Calu3 (cell line): ENCODE measurements at regions of chr22 and their contacts with region 1.

Region 1: DNA sequence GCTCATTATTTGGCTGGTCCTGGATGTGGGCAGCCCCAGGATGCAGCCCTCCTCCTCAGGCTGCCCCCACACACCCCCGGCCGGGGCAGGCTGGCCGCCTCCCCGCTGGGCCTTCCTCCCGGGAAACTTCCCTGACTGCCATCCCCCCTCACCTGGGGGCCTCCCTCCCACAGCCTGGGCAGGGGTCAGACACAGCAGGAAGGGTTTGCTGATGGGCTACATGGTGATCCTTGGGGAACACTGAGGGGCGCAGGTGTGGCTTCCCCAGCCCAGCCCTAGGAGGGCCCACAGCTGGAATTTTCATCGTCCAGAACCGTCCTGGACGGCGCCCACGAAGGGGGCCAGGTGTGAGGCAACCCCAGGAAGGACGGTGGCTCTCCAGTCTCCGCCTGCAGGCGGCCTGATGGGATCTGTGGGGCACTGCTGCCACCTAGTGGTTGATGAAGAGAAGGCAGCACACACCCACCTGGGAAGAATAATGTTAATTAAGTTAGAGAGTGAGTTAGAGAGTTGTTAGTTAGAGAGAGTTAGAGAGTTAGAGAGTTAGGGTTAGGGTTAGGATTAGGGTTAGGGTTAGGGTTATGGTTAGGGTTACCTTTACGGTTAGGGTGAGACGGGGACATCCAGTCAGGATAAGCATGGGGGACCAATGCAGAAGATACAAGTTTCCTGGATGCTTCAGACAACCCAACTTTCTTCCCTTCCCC is 75.9 kb upstream of the PRR5 start:
- DNase-seq: peak; percentile 77
- H3K4me3 Mint-ChIP-seq: no peak overlapping the region
- H3K27ac Mint-ChIP-seq: no peak overlapping the region
- H3K4me1 Mint-ChIP-seq: no peaks in the 10 kb centered on the region
- H3K27me3 Mint-ChIP-seq: peaks cover 74% of the 10 kb centered on the region
- CTCF ChIP-seq: peak; percentile 97

Region 2: GRCh38 chr22:43993027-43993760 is 632.9 kb before region 1 on chr22:
- CTCF ChIA-PET with region 1: interaction called, 23 read pairs
- intact Hi-C with region 1: loop called (anchors 1 kb)
- DNase-seq: peak; percentile 53
- H3K4me3 Mint-ChIP-seq: no peak overlapping the region
- H3K27ac Mint-ChIP-seq: no peak overlapping the region
- H3K4me1 Mint-ChIP-seq: no peaks in the 10 kb centered on the region
- H3K27me3 Mint-ChIP-seq: no peaks in the 10 kb centered on the region
- CTCF ChIP-seq: peak; percentile 91

Region 3: DNA sequence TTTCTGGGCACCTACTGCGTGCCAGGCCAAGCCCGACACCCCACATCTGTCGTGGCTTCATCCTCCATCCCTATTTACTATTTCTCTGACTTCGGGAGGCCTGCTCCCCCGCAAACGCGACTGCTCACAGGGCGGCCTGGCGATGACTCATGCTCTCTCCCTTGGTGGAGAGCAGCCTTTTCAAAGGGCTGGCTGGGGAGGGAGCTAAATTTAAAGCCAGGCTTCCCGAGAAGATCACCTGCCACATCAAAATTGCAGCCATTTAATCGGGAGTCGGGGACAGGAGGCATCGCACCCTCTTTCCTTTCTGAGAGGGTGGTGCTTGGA is 288.5 kb before region 1 on chr22:
- CTCF ChIA-PET with region 1: interaction called, 14 read pairs
- intact Hi-C with region 1: loop called (anchors 10 kb)
- DNase-seq: peak; percentile 61
- H3K4me3 Mint-ChIP-seq: no peak overlapping the region
- H3K27ac Mint-ChIP-seq: no peak overlapping the region
- H3K4me1 Mint-ChIP-seq: no peaks in the 10 kb centered on the region
- H3K27me3 Mint-ChIP-seq: peaks cover 3% of the 10 kb centered on the region
- CTCF ChIP-seq: no peak

Region 4: GRCh38 chr22:44701824-44702478 is 75.8 kb after region 1 on chr22 and contains the start of gene PRR5:
- CTCF ChIA-PET with region 1: no interaction called
- intact Hi-C with region 1: no loop called
- DNase-seq: peak; percentile 87
- H3K4me3 Mint-ChIP-seq: peak within 1 kb of the TSS; percentile 76
- H3K27ac Mint-ChIP-seq: no peak within 1 kb of the TSS
- H3K4me1 Mint-ChIP-seq: no peaks in the 10 kb centered on the region
- H3K27me3 Mint-ChIP-seq: peaks cover 14% of the 10 kb centered on the region
- CTCF ChIP-seq: no peak
- total RNA-seq, gene PRR5: 12.5 and 14.1 TPM in 2 replicates